Activated CD8-positive, alpha-beta T cell treated with anti-CD3 and anti-CD28 coated beads for 36 hours (primary cell): ENCODE measurements at regions of chr5 and their contacts with region 1.

Region 1: GRCh38 chr5:177491429-177491945 is 5.9 kb downstream of the PDLIM7 start:
- DNase-seq: peak; percentile 60
- ATAC-seq: peak; percentile 37
- H3K4me3 Mint-ChIP-seq: no peak overlapping the region
- H3K27ac Mint-ChIP-seq: no peak overlapping the region
- H3K4me1 Mint-ChIP-seq: peaks cover 27% of the 10 kb centered on the region
- H3K27me3 Mint-ChIP-seq: no peaks in the 10 kb centered on the region
- CTCF ChIP-seq: peak; percentile 84

Region 2: GRCh38 chr5:177446200-177447065 is 45.1 kb before region 1 on chr5 and contains the start of gene PRR7:
- CTCF ChIA-PET with region 1: no interaction called
- POLR2A ChIA-PET with region 1: interaction called, 10 read pairs
- intact Hi-C with region 1: no loop called
- DNase-seq: peak; percentile 77
- ATAC-seq: peak; percentile 58
- H3K4me3 Mint-ChIP-seq: peak within 1 kb of the TSS; percentile 79
- H3K27ac Mint-ChIP-seq: peak within 1 kb of the TSS; percentile 80
- H3K4me1 Mint-ChIP-seq: peaks cover 43% of the 10 kb centered on the region
- H3K27me3 Mint-ChIP-seq: no peaks in the 10 kb centered on the region
- CTCF ChIP-seq: no peak
- total RNA-seq, gene PRR7: 32.6 to 36.4 TPM

Region 3: GRCh38 chr5:177478711-177479646 is 12.5 kb before region 1 on chr5:
- CTCF ChIA-PET with region 1: interaction called, 26 read pairs
- POLR2A ChIA-PET with region 1: interaction called, 130 read pairs
- intact Hi-C with region 1: no loop called
- DNase-seq: peak; percentile 80
- ATAC-seq: peak; percentile 76
- H3K4me3 Mint-ChIP-seq: peak overlapping the region; percentile 32
- H3K27ac Mint-ChIP-seq: peak overlapping the region; percentile 98
- H3K4me1 Mint-ChIP-seq: peaks cover 52% of the 10 kb centered on the region
- H3K27me3 Mint-ChIP-seq: no peaks in the 10 kb centered on the region
- CTCF ChIP-seq: no peak